Posterior vena cava (tissue), 2 donors: ENCODE measurements at regions of chr17 and their contacts with region 1.

Region 1: GRCh38 chr17:64418506-64419339 is 28.1 kb upstream of the PECAM1 start:
- DNase-seq: no peak

Region 2: GRCh38 chr17:64306850-64307463 is 111.8 kb before region 1 on chr17:
- intact Hi-C with region 1: loop called in 1 of 2 experiments (anchors 5 kb)
- DNase-seq: peak; percentile 90

Region 3: DNA sequence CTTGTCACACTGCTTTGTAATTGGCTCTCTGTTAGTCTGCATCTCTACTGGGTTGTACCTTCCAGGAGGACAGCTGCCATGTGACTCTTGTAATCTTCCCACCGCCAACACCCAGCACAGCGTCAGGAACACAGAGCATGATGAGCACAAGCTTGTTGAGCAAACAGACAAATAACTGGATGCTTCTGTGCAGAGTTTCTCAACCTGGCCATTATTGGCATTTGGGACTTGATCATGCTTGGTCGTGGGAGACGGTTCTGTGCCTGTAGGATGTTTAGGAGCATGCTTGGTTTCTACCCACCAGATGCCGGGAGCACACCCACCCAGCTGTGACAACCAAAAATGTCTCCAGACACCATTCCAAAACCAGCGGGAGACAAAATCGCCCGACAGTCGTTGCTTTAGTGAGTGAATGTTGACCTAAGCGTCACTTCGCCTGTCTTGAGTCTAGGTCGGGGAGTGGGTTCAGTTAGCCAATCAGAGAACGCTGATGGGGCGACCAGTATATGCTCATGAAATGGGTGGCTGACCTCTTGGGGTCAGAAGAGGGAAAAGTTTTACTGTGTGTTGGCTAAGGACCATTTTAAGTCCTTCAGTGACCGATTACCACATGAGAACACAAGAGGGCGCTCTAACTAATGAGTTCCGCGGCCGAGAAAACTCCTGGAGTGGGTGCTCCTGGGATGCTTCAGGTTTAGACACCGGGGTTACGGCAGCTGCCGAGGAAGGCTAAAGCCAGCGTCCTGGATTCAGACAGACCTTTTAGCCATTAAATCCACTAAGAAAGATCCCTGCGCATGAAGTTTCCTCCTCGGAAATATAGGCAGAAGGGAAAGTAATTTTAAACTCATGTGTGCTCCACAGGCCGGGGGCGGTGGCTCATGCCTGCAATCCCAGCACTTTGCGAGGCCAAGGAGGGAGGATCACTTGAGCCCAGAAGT is 97.8 kb before region 1 on chr17:
- intact Hi-C with region 1: loop called (anchors 1 to 5 kb)
- DNase-seq: no peak

Region 4: DNA sequence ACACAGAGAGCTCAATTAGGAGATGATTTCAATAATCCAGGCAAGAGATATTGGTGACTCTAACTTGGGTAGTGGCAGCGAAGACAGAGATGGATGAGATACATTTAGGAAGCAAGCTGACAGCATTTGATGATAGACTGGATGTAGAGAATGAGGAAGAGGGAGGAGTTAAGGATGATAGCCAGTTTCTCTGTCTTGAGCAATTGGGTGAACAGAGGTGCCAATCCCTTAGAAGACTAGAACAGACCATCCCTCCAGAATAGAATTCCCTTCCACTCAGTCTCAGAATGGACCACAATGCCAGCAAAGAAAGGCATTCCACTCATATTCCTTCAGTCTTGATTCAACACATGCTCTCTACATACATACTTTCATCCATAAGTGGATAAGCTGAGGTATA is 60.9 kb after region 1 on chr17:
- intact Hi-C with region 1: loop called in 1 of 2 experiments (anchors 10 kb)
- DNase-seq: no peak